SK-N-SH (cell line): ENCODE measurements at regions of chr17 and their contacts with region 1.

Region 1: GRCh38 chr17:39621523-39622379 is 5.0 kb upstream of the PPP1R1B start:
- DNase-seq: peak; percentile 88
- H3K4me3 ChIP-seq: peak overlapping the region in 1 of 2 experiments; percentile 51; a peak in 2 of 4 replicates
- H3K27ac ChIP-seq: no peak overlapping the region
- H3K4me1 ChIP-seq: peaks cover 0 to 15% of the 10 kb centered on the region in 2 experiments; a peak in 1 of 4 replicates
- H3K27me3 ChIP-seq: peaks cover 6% of the 10 kb centered on the region
- CTCF ChIP-seq: peak; percentile 99
- EP300 ChIP-seq: no peak
- RAD21 ChIP-seq: peak; percentile 86

Region 2: DNA sequence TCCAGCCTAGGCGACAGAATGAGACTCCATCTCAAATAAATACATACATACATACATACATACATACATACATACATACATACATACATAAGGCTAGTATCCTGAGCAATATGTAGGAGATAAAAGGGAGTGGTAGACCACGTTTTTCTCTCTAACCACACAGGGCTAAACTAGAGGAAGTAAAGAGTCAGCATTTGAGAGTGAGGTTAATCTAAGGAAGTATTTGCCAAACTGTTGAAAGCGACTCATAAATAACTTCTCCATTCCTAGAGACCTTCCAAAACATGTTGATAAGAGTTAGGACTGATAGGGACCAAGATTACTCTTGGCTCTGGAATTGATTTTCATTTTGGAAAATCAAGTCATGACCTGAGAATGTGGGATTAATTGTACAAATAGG is 82.9 kb before region 1 on chr17:
- CTCF ChIA-PET with region 1: interaction called, 27 read pairs
- POLR2A ChIA-PET with region 1: no interaction called
- DNase-seq: no peak
- H3K4me3 ChIP-seq: no peak overlapping the region
- H3K27ac ChIP-seq: no peak overlapping the region
- H3K4me1 ChIP-seq: no peaks in the 10 kb centered on the region
- H3K27me3 ChIP-seq: no peaks in the 10 kb centered on the region
- CTCF ChIP-seq: no peak
- EP300 ChIP-seq: no peak
- RAD21 ChIP-seq: no peak

Region 3: GRCh38 chr17:39579318-39580081 is 42.3 kb before region 1 on chr17:
- CTCF ChIA-PET with region 1: interaction called, 64 read pairs
- POLR2A ChIA-PET with region 1: interaction called, 4 read pairs
- DNase-seq: no peak
- H3K4me3 ChIP-seq: no peak overlapping the region
- H3K27ac ChIP-seq: no peak overlapping the region
- H3K4me1 ChIP-seq: peaks cover 0 to 3% of the 10 kb centered on the region in 2 experiments; a peak in 1 of 4 replicates
- H3K27me3 ChIP-seq: no peaks in the 10 kb centered on the region
- CTCF ChIP-seq: no peak
- EP300 ChIP-seq: no peak
- RAD21 ChIP-seq: no peak

Region 4: DNA sequence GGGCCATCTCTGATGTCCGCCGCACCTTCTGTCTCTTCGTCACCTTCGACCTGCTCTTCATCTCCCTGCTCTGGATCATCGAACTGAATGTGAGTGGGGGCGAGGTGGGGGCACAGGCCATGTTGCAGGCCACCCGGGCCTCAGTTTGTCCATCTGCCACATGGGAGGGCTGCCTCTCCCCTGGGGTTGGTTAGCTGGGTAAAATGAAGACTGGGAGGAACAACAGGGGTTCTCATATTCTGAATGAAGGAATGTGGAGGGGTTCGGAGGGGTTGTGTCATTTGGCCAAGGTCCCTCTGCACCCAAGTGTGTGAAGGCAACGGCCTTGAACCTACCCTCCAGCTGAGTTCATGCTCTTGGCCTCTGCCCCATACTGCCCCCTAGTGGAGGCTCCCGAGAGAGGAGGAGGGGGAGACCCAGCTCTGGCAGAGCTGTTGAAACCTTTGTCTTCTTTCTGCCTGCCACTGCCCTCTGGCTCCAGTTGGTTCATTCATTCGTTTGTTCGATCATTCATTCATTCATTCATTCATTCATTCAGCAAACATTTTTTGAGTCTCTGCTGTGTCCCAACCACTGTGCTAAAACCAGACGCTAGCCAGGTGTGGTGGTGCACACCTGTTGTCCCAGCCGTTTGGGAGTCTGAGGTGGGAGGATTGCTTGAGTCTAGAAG is 32.0 kb after region 1 on chr17:
- CTCF ChIA-PET with region 1: interaction called, 83 read pairs
- POLR2A ChIA-PET with region 1: no interaction called
- DNase-seq: peak; percentile 92
- H3K4me3 ChIP-seq: no peak overlapping the region; a peak in 1 of 4 replicates
- H3K27ac ChIP-seq: no peak overlapping the region
- H3K4me1 ChIP-seq: peaks cover 0 to 4% of the 10 kb centered on the region in 2 experiments; a peak in 1 of 4 replicates
- H3K27me3 ChIP-seq: no peaks in the 10 kb centered on the region
- CTCF ChIP-seq: peak; percentile 93
- EP300 ChIP-seq: no peak
- RAD21 ChIP-seq: peak; percentile 26; the same call in 1 of the 2 replicates

Region 5: GRCh38 chr17:39687811-39688518 is 66.2 kb after region 1 on chr17 and contains the start of gene PGAP3:
- CTCF ChIA-PET with region 1: interaction called, 15 read pairs
- POLR2A ChIA-PET with region 1: no interaction called
- DNase-seq: peak; percentile 96
- H3K4me3 ChIP-seq: peak within 1 kb of the TSS; percentile 61 to 78
- H3K27ac ChIP-seq: peak within 1 kb of the TSS; percentile 84 to 98
- H3K4me1 ChIP-seq: peaks cover 0 to 13% of the 10 kb centered on the region in 2 experiments; a peak in 2 of 4 replicates
- H3K27me3 ChIP-seq: no peaks in the 10 kb centered on the region
- CTCF ChIP-seq: peak; percentile 16; the same call in 1 of the 2 replicates
- EP300 ChIP-seq: no peak
- RAD21 ChIP-seq: no peak
- polyA plus RNA-seq, gene PGAP3: 20.9 and 25.8 TPM in 2 replicates

Region 6: DNA sequence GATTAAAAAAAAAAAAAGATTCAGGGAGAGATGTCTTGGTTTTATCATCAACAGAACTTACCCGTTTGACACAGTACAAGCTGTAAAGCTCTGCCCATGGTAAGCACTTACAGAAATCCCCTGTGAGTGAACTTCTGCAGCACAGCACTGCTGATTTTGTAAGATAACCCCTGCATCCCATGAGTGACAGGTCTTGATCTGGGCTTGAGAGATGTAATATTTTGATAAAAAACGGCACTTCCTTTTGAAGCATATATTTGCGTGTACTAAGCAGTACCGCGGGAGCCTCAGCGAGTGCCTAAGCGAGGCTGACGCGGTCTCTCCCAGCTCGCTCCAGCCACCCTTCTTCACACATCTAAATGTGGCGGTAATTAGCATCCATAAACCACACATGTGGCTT is 191.9 kb after region 1 on chr17:
- CTCF ChIA-PET with region 1: no interaction called
- POLR2A ChIA-PET with region 1: no interaction called
- DNase-seq: no peak
- H3K4me3 ChIP-seq: no peak overlapping the region
- H3K27ac ChIP-seq: no peak overlapping the region
- H3K4me1 ChIP-seq: no peaks in the 10 kb centered on the region
- H3K27me3 ChIP-seq: peaks cover 49% of the 10 kb centered on the region
- CTCF ChIP-seq: no peak
- EP300 ChIP-seq: no peak
- RAD21 ChIP-seq: no peak

Region 7: DNA sequence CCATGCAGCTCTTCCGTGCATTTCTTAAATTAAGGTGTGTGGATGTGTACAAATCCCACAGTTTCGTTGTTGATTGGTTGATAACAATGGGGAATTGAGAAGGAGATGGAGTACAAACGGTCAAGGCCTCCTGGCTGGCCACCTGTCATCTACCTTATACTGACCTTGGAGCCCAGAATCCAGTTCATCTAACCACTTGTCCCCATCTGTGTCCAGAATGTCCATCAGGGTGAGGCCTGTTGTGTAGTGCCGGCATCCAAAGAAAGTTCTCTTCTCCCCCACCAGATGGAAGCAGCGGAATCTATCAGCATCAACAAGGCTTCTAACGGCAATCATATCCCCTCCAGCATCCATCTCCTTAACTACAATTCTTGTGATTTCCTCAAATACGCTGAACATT is 295.2 kb after region 1 on chr17:
- CTCF ChIA-PET with region 1: no interaction called
- POLR2A ChIA-PET with region 1: no interaction called
- DNase-seq: no peak
- H3K4me3 ChIP-seq: no peak overlapping the region
- H3K27ac ChIP-seq: no peak overlapping the region
- H3K4me1 ChIP-seq: no peaks in the 10 kb centered on the region
- H3K27me3 ChIP-seq: no peaks in the 10 kb centered on the region
- CTCF ChIP-seq: no peak; the same call in 1 of the 2 replicates
- EP300 ChIP-seq: no peak
- RAD21 ChIP-seq: peak; percentile 22